CD8-positive, alpha-beta T cell (primary cell): ENCODE measurements at regions of chr12 and their contacts with region 1.

Region 1: GRCh38 chr12:56724972-56725722 is at the start of gene NACA:
- DNase-seq: peak; percentile 94 to 99 (median 97)
- ATAC-seq: peak; percentile 95
- H3K4me3 ChIP-seq: peak within 1 kb of the TSS; percentile 70 to 88
- H3K4me3 Mint-ChIP-seq: peak within 1 kb of the TSS; percentile 99
- H3K27ac ChIP-seq: peak within 1 kb of the TSS; percentile 75 to 80
- H3K27ac Mint-ChIP-seq: peak within 1 kb of the TSS; percentile 96
- H3K4me1 ChIP-seq: peaks cover 45% of the 10 kb centered on the region
- H3K4me1 Mint-ChIP-seq: peaks cover 52% of the 10 kb centered on the region
- H3K27me3 ChIP-seq: no peaks in the 10 kb centered on the region
- H3K27me3 Mint-ChIP-seq: no peaks in the 10 kb centered on the region
- CTCF ChIP-seq: no peak
- total RNA-seq, gene NACA: 1,373 to 1,407 TPM

Region 2: DNA sequence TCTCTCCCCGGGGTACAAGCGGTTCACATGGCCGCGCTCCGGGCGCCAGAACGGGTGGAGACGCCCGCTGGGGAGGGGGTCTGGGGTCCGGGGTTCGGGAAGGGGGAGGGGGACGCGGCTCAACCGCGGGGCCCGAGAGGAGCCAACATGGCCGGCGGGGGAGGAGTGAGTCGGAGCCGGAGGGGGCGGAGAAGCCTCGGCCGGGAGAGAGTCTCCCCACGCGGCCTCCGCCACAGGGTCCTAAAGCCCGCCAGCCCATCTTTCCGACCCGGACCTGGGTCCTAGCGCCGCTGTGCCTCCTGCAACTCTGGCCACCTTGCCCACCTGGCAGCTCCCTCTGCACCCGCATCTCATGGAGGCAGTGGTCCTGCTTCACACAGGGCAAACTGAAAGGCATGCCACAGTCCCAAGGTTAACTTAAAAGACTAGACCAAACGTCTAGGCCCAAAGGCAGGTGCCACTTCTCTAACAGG is 95.0 kb before region 1 on chr12 and contains the start of gene BAZ2A:
- CTCF ChIA-PET with region 1: interaction called, 3 read pairs
- POLR2A ChIA-PET with region 1: interaction called, 19 read pairs
- intact Hi-C with region 1: no loop called
- DNase-seq: peak; percentile 64 to 91 (median 85)
- ATAC-seq: peak; percentile 68
- H3K4me3 ChIP-seq: peak within 1 kb of the TSS; percentile 74 to 99
- H3K4me3 Mint-ChIP-seq: peak within 1 kb of the TSS; percentile 82
- H3K27ac ChIP-seq: peak within 1 kb of the TSS; percentile 84 to 93
- H3K27ac Mint-ChIP-seq: peak within 1 kb of the TSS; percentile 93
- H3K4me1 ChIP-seq: peaks cover 56% of the 10 kb centered on the region
- H3K4me1 Mint-ChIP-seq: peaks cover 64% of the 10 kb centered on the region
- H3K27me3 ChIP-seq: no peaks in the 10 kb centered on the region
- H3K27me3 Mint-ChIP-seq: no peaks in the 10 kb centered on the region
- CTCF ChIP-seq: no peak
- total RNA-seq, gene BAZ2A: 197 to 198 TPM

Region 3: GRCh38 chr12:56645717-56646446 is 79.3 kb before region 1 on chr12 and contains the start of gene ATP5F1B:
- CTCF ChIA-PET with region 1: no interaction called
- POLR2A ChIA-PET with region 1: interaction called, 19 read pairs
- intact Hi-C with region 1: loop called (anchors 1 kb)
- DNase-seq: peak; percentile 77 to 99 (median 88)
- ATAC-seq: peak; percentile 93
- H3K4me3 ChIP-seq: peak within 1 kb of the TSS; percentile 96 to 99
- H3K4me3 Mint-ChIP-seq: peak within 1 kb of the TSS; percentile 96
- H3K27ac ChIP-seq: peak within 1 kb of the TSS; percentile 90 to 94
- H3K27ac Mint-ChIP-seq: peak within 1 kb of the TSS; percentile 99
- H3K4me1 ChIP-seq: peaks cover 21% of the 10 kb centered on the region
- H3K4me1 Mint-ChIP-seq: peaks cover 33% of the 10 kb centered on the region
- H3K27me3 ChIP-seq: no peaks in the 10 kb centered on the region
- H3K27me3 Mint-ChIP-seq: no peaks in the 10 kb centered on the region
- CTCF ChIP-seq: no peak
- total RNA-seq, gene ATP5F1B: 417 to 429 TPM

Region 4: GRCh38 chr12:56751712-56752598 is 26.8 kb after region 1 on chr12 and contains the start of gene PRIM1:
- CTCF ChIA-PET with region 1: interaction called, 3 read pairs
- POLR2A ChIA-PET with region 1: interaction called, 7 read pairs
- intact Hi-C with region 1: loop called (anchors 1 kb)
- DNase-seq: peak; percentile 58 to 89 (median 81)
- ATAC-seq: peak; percentile 81
- H3K4me3 ChIP-seq: peak within 1 kb of the TSS; percentile 91 to 99
- H3K4me3 Mint-ChIP-seq: peak within 1 kb of the TSS; percentile 97
- H3K27ac ChIP-seq: peak within 1 kb of the TSS; percentile 71 to 76
- H3K27ac Mint-ChIP-seq: peak within 1 kb of the TSS; percentile 86
- H3K4me1 ChIP-seq: peaks cover 11% of the 10 kb centered on the region
- H3K4me1 Mint-ChIP-seq: peaks cover 22% of the 10 kb centered on the region
- H3K27me3 ChIP-seq: no peaks in the 10 kb centered on the region
- H3K27me3 Mint-ChIP-seq: no peaks in the 10 kb centered on the region
- CTCF ChIP-seq: peak; percentile 23
- total RNA-seq, gene PRIM1: 5.0 to 5.8 TPM

Region 5: DNA sequence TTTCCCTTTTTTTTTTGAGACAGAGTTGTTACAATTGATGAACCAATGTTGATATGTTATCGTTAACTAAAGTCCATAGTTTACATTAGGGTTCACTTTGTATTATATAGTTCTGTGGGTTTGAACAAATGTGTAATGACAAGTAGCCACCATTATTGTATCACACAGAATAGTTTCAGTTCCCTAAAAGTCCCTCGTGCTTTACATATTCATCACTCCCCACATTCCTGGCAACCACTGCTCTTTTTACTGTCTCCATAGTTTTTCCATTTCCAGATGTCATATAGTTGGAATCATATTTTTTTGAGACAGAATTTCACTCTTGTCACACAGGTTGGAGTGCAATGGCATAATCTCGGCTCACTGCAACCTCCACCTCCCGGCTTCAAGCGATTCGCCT is 50.5 kb after region 1 on chr12:
- CTCF ChIA-PET with region 1: no interaction called
- POLR2A ChIA-PET with region 1: no interaction called
- intact Hi-C with region 1: no loop called
- DNase-seq: no peak
- ATAC-seq: no peak
- H3K4me3 ChIP-seq: no peak overlapping the region
- H3K4me3 Mint-ChIP-seq: no peak overlapping the region
- H3K27ac ChIP-seq: no peak overlapping the region
- H3K27ac Mint-ChIP-seq: no peak overlapping the region
- H3K4me1 ChIP-seq: no peaks in the 10 kb centered on the region
- H3K4me1 Mint-ChIP-seq: no peaks in the 10 kb centered on the region
- H3K27me3 ChIP-seq: no peaks in the 10 kb centered on the region
- H3K27me3 Mint-ChIP-seq: no peaks in the 10 kb centered on the region
- CTCF ChIP-seq: no peak

Region 6: GRCh38 chr12:57078519-57079404 is 353.6 kb after region 1 on chr12 and contains the start of gene NEMP1:
- CTCF ChIA-PET with region 1: no interaction called
- POLR2A ChIA-PET with region 1: interaction called, 3 read pairs
- intact Hi-C with region 1: loop called in 1 of 2 experiments (anchors 1 kb)
- DNase-seq: peak; percentile 89 to 100 (median 92)
- ATAC-seq: peak; percentile 96
- H3K4me3 ChIP-seq: peak within 1 kb of the TSS; percentile 78 to 98
- H3K4me3 Mint-ChIP-seq: peak within 1 kb of the TSS; percentile 96
- H3K27ac ChIP-seq: peak within 1 kb of the TSS; percentile 72 to 94
- H3K27ac Mint-ChIP-seq: peak within 1 kb of the TSS; percentile 96
- H3K4me1 ChIP-seq: peaks cover 8% of the 10 kb centered on the region
- H3K4me1 Mint-ChIP-seq: peaks cover 25% of the 10 kb centered on the region
- H3K27me3 ChIP-seq: no peaks in the 10 kb centered on the region
- H3K27me3 Mint-ChIP-seq: no peaks in the 10 kb centered on the region
- CTCF ChIP-seq: no peak
- total RNA-seq, gene NEMP1: 4.3 to 7.4 TPM